GM23248 (cell line): ENCODE measurements at regions of chr4 and their contacts with region 1.

Region 1: DNA sequence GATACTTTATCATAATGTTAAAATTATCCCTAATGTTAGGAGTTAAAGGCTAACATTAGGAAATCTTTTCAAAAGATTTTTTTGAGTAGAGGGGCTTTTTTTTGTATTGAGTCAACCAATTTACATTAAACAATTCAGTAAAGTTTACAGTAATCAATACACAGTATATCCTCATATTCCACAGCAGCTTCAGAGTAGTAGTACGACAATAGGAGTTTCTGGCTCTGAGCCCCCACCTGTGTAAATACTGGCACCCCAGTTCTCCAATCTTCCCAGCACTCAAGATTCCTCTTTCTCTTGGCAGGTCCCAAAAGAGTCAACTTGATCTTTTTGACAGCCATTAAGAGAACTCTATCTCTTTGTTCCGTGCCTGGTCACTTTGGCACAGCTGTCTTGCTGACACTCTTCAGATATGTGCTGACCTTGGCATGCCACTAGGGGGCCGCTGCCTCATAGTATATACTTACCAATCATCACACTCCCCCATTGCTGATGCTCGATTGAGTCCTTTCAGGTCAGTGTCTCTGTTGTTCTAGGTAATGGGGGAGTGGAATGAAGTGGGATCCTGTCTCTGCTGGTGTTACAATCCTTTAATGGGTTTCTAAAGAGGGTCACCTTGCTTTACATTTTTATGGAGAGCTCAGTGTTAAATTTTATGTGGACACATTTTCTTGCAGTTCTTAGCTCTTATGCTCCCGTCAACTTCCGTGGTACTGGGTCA is 19.5 kb upstream of the CCNI start:
- DNase-seq: peak; percentile 80
- H3K4me3 ChIP-seq: no peak overlapping the region
- H3K27ac ChIP-seq: no peak overlapping the region
- H3K4me1 ChIP-seq: peaks cover 27% of the 10 kb centered on the region
- H3K27me3 ChIP-seq: no peaks in the 10 kb centered on the region

Region 2: DNA sequence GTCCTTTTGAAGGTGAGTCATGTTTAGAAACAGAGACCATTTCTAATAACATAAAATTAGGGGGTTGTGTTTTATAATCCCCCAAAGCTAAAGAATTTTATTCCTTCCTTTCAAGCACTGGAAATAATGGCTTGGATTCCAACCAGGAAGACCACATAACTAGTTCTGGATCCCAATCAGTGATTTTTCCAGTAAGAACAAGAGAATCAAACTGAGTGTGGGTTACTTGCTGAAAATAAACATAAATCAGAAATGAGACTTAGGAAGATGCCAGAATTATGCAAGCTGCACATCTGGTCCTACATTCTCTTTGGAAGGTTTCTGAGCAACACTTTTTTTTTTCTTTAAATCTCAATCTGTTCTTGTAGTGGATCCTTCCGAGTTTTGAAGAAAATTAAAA is 273.6 kb before region 1 on chr4:
- in situ Hi-C with region 1: no loop called
- DNase-seq: peak; percentile 34
- H3K4me3 ChIP-seq: no peak overlapping the region
- H3K27ac ChIP-seq: no peak overlapping the region
- H3K4me1 ChIP-seq: no peaks in the 10 kb centered on the region
- H3K27me3 ChIP-seq: no peaks in the 10 kb centered on the region

Region 3: DNA sequence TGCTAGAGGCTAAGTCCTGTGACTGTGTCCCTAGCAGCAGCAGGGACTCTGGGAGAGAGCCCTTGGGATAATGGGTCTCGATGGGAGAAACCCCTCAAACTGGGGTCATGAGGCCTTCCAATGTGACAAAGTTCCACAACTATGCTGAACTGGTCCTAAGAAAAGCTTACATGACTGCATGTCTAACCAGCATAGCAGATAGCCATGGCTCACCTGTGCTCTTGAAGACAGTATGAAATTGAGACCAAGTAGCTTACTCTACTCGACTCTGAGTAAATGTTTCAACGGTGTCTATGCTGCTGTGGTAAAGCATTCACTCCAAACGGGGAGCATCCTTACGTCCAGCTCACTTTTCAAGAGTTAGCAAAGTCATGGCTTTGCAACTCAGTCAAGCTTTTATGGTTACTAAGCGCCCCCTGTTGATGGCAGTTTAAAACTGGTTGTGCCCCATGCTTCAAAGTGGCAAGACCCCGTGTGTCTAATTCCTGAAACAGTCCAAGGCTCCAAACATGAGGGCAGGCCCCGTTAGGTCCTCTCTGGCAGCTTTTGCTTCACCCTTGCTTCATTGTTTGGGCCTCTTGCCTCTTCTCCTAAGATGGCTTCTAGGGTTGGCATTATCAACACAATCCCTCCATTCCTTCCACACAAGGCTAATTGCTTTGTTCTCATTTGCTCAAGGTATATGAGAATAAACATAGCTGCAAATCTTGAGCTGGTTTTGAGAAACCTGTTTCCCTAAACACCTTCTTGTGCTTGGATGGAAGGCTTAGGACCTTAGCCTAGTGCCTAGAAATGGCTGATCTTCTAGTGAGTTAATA is 108.3 kb after region 1 on chr4:
- in situ Hi-C with region 1: loop called (anchors 10 kb)
- DNase-seq: peak; percentile 92
- H3K4me3 ChIP-seq: no peak overlapping the region
- H3K27ac ChIP-seq: no peak overlapping the region
- H3K4me1 ChIP-seq: peaks cover 16% of the 10 kb centered on the region
- H3K27me3 ChIP-seq: no peaks in the 10 kb centered on the region